ENCODE measurements at regions of chr1 and their contacts with region 1.

Region 1: DNA sequence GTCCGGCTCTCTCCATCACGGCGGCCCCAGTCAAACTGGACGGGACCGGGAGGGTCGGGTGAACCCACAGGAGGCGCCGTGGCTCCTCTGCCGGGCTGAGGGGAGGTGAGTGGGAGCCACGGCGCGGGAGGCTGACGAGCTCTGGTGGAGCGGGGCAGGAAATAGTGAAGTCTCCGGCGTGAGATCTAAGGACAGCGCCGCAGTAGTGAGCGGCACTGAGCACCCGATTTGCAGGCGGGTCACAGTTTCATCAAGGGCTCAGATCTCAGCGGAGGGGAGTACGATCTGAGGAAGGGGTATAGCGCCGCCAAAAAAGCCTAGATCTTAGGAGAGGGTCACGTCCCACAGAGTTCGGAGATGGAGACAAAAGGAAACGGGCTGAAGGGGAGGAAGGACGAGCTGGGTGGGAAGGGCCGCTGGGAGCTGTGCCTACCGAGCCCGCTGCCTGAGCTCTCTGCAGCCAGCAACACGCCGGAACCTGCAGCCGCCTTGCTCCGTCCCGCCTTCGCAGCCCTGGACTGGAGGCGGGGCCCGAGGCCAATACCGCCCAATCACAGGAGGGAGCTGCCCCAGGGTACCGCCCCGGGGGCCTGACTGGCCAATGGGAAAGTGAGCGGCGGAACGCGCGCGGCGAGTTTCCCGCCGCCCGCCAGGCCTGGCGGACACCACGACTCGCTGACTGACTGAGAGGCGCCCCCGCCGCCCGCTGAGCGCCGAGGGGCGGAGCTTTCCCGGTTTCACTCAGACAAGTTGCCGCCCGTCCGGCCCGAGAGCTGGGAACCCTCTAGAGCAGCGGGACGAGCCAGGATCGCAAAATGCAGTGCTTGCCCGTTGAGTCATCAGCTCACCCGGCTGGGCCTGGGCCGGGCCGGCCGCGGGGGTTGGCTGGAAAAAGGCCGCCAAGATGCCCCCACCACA is 1.9 kb downstream of the SFN start:
- DNase-seq: peak; percentile 88
- ATAC-seq: peak; percentile 89
- H3K4me3 ChIP-seq: peak overlapping the region; percentile 72 to 89
- H3K27ac ChIP-seq: peak overlapping the region; percentile 94
- H3K4me1 ChIP-seq: peaks cover 18% of the 10 kb centered on the region
- H3K27me3 ChIP-seq: no peaks in the 10 kb centered on the region
- CTCF ChIP-seq: no peak

Region 2: DNA sequence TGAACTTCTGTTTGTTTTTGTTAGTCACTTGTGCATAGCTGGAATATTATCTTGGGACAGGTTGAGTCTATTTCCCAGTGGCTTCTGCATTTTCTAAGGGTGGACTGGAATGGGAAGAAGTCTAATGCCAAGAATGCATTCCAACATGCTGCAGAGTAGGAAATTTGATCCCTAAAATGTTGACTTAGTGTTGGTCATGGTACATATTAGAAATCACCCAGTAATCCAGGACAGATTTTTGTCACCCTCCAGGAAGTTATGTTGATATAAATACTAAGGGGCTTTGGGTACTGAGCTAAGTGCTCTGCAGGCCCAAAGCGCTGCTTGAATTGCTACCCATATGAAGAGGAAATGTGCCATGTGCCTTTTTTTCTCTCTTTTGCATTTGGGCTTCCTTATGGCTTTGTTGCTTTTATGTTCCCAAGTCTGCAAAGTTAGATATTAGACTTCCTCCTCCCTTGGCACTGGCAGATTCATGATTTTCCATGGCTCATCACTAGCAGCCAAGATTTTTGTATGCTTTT is 159.0 kb before region 1 on chr1:
- CTCF ChIA-PET with region 1: no interaction called
- POLR2A ChIA-PET with region 1: interaction called, 14 read pairs
- in situ Hi-C with region 1: no loop called
- intact Hi-C with region 1: no loop called
- DNase-seq: peak; percentile 98
- ATAC-seq: peak; percentile 82
- H3K4me3 ChIP-seq: peak overlapping the region in 1 of 2 experiments; percentile 31; a peak in 2 of 4 replicates
- H3K27ac ChIP-seq: peak overlapping the region; percentile 81
- H3K4me1 ChIP-seq: peaks cover 72% of the 10 kb centered on the region
- H3K27me3 ChIP-seq: no peaks in the 10 kb centered on the region
- CTCF ChIP-seq: no peak

Region 3: DNA sequence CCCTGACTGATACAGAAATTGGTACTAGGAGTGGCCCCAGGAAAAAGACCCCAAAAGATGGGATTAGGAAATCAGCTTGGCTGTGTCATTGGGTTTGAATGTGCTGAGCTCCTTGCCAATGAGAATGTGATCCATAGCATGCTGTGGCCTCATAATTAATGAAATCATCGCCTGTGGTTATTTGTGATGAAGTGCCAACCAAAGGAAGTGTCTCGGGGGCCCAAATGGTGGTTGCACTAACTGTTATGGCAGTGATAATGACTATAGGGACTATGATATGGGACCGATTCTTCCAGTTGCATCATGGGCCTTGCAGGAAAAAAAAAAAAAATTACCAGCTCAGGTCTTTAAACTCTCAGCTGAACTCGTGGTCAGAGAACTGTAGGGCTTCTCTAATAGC is 53.8 kb before region 1 on chr1:
- CTCF ChIA-PET with region 1: interaction called, 12 read pairs
- POLR2A ChIA-PET with region 1: no interaction called
- in situ Hi-C with region 1: no loop called
- intact Hi-C with region 1: no loop called
- DNase-seq: no peak
- ATAC-seq: no peak
- H3K4me3 ChIP-seq: no peak overlapping the region
- H3K27ac ChIP-seq: no peak overlapping the region
- H3K4me1 ChIP-seq: no peaks in the 10 kb centered on the region
- H3K27me3 ChIP-seq: no peaks in the 10 kb centered on the region
- CTCF ChIP-seq: no peak

Region 4: GRCh38 chr1:26959722-26960615 is 95.1 kb after region 1 on chr1 and contains the start of gene KDF1:
- CTCF ChIA-PET with region 1: no interaction called
- POLR2A ChIA-PET with region 1: interaction called, 11 read pairs
- in situ Hi-C with region 1: no loop called
- intact Hi-C with region 1: no loop called
- DNase-seq: no peak
- ATAC-seq: peak; percentile 71
- H3K4me3 ChIP-seq: peak within 1 kb of the TSS; percentile 52 to 62
- H3K27ac ChIP-seq: peak within 1 kb of the TSS; percentile 65
- H3K4me1 ChIP-seq: peaks cover 14% of the 10 kb centered on the region
- H3K27me3 ChIP-seq: no peaks in the 10 kb centered on the region
- CTCF ChIP-seq: no peak
- total RNA-seq, gene KDF1: 3.2 TPM

Region 5: DNA sequence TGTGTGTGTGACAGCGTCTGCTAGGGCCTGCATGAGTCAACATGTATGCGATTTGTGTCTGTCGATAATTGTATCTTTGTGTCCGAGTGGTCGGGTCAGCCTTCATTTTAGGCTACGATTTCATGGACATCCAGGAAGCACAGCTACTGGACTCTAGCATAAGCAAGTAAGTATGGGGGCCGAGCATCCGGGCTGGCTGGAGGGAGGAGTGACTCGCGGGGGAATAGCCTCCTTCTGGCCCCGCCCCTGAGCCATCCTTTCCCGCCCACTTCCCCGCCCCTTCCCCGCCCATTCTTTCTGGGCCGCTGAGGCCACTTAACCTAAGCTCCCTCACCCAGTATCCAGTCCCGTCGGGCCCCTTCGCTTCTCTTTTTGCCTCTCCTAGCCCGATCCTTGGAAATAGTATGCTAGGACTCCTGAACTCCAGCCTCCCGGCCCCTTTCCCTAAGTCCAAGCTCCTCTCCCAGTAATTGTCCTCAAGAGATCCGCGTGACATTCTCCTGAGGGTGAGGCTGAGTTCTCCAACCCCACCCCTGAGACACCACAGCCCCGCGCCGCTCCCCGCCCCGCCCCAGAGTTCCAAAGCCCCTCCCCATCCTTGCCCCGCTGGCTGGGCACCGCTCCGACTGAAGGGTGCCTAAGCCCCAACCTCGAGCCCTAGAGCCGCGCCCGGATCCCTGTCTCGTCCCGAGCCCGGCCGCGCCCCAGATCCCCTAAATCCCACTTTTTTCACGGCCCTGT is 500.7 kb after region 1 on chr1:
- CTCF ChIA-PET with region 1: no interaction called
- POLR2A ChIA-PET with region 1: no interaction called
- in situ Hi-C with region 1: no loop called
- intact Hi-C with region 1: no loop called
- DNase-seq: peak; percentile 87
- ATAC-seq: peak; percentile 86
- H3K4me3 ChIP-seq: peak overlapping the region; percentile 74 to 77
- H3K27ac ChIP-seq: peak overlapping the region; percentile 82
- H3K4me1 ChIP-seq: peaks cover 15% of the 10 kb centered on the region
- H3K27me3 ChIP-seq: no peaks in the 10 kb centered on the region
- CTCF ChIP-seq: no peak